ENCODE measurements at regions of chr10 and their contacts with region 1.

Region 1: DNA sequence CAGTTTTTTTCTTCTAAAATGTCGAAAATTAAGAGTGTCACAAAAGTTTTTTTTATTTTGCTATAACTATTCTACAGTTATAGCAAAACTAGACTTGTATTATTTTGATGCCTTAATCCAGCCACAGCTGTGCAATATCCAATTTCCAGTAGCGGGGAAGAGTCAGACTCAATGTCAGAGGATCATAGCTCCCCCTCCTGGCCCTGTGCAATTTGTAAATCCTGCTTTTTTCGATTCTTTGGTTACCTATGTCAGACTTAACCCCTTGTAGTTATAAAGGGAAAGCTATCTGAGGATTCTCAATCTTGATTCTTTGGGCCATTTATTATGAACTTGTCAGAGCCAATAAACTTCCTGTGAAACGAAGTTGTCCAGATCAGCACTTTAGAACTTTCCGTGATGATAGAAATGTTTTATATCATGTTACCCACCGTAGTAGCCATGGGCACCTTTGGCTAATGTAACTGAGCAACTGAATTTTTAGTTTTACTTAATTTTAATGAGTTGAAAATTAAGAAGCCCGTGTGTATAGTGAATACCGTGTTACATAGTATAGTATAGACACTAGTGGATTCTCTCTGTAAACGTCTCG is 87.7 kb upstream of the PRKCQ start:
- DNase-seq: peak; percentile 43
- ATAC-seq: peak; percentile 59
- H3K4me3 ChIP-seq: no peak overlapping the region
- H3K27ac ChIP-seq: no peak overlapping the region
- H3K4me1 ChIP-seq: no peaks in the 10 kb centered on the region
- H3K27me3 ChIP-seq: peaks cover 8% of the 10 kb centered on the region; the same call in 1 of the 2 replicates
- CTCF ChIP-seq: peak; percentile 58; the same call in 1 of the 2 replicates

Region 2: DNA sequence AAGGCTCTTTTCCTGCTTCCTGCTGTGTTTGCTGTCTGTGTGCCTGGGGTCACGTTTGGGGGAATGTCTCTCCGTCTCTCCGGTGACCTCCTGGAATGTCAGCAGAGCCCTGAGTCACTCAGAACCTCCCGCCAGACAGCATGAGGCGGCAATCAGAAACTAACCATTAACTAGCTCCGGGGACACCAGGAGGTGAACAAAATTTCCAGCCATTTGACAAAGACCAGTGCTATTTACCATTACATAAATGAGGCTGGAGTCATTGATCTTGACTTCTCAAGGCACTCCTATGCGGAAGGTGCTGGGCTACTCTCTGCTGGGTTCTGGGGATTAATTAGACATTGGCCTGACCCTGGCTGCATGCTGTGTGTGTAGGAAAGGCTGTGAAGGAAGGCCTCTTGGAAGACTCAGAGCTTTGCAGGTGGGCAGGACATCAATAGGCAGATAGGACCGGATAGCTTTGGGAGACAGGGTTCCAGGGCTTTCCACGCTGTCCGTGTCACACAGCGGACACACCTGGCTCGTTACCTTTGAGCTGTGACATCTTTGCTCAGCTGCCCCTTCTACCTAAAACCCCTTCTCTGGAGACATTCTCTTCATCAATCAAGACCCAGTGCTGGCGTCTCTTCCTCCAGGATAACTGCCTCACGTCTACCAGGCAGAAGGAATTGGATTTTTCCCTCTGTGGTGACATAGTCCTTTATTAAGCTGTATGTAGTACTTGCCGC is 388.1 kb before region 1 on chr10:
- CTCF ChIA-PET with region 1: no interaction called
- POLR2A ChIA-PET with region 1: no interaction called
- intact Hi-C with region 1: no loop called
- DNase-seq: peak; percentile 7
- ATAC-seq: no peak
- H3K4me3 ChIP-seq: no peak overlapping the region
- H3K27ac ChIP-seq: no peak overlapping the region
- H3K4me1 ChIP-seq: peaks cover 13% of the 10 kb centered on the region
- H3K27me3 ChIP-seq: no peaks in the 10 kb centered on the region
- CTCF ChIP-seq: no peak

Region 3: DNA sequence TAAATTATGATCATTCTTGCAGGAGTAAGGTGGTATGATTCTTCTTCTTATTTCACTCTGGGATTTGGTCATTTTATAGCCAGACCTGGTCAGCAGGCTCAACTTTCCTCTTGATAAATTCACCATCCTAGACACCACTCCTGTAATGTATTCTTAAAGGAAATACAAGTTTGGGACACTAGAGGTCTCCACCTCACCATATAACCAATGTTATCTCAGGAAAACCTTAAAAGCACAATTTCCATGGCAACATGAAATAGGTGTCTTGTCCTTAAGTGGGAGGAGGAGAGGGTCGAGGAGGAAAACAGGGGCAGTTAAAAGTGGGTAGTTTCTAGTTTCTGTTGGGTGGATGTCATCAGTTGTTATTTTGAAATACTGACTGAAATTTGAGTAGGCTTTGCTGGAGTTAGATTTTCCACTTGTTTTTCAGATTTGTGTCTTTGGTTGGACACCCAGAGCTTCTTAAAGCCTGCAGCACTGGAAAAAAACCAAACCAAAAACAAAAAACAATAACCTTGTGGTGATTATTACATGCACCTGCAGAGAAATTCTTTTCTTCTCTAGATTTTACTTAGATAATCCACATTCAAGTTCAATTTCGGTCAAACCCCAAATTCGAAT is 250.8 kb before region 1 on chr10:
- CTCF ChIA-PET with region 1: no interaction called
- POLR2A ChIA-PET with region 1: no interaction called
- intact Hi-C with region 1: loop called (anchors 2 kb)
- DNase-seq: peak; percentile 49
- ATAC-seq: peak; percentile 66
- H3K4me3 ChIP-seq: no peak overlapping the region
- H3K27ac ChIP-seq: no peak overlapping the region
- H3K4me1 ChIP-seq: no peaks in the 10 kb centered on the region
- H3K27me3 ChIP-seq: peaks cover 12% of the 10 kb centered on the region
- CTCF ChIP-seq: peak; percentile 65